Activated CD8-positive, alpha-beta T cell treated with anti-CD3 and anti-CD28 coated beads, Interleukin-2, amount 10 ng/mL, durations not matched to agents 7 days and 5 days (primary cell): ENCODE measurements at regions of chr5 and their contacts with region 1.

Region 1: GRCh38 chr5:82225525-82226172 is 52.5 kb downstream of the RPS23 start:
- DNase-seq: peak; percentile 72
- ATAC-seq: peak; percentile 90
- H3K4me3 Mint-ChIP-seq: no peak overlapping the region
- H3K27ac Mint-ChIP-seq: no peak overlapping the region
- H3K4me1 Mint-ChIP-seq: peaks cover 2% of the 10 kb centered on the region
- H3K27me3 Mint-ChIP-seq: no peaks in the 10 kb centered on the region

Region 2: DNA sequence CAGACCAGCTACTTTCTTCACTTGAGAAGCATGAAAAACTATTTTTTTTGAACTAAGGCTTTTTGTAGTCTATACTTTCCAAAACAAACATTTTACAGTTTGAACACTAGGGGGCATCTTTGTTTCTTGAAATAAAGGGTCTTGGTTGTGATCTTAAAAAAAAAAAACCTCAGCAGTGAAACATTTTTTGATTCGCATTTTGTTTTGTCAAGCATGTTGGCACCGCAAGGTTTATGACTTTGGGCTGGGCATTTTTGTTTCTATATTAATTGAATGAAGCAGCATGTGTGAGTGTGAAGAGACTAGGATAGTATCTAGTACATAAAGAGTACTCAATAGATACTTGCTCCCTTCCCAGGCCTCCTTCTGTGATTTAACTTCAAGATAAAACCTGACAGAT is 800.1 kb before region 1 on chr5:
- CTCF ChIA-PET with region 1: interaction called, 19 read pairs
- POLR2A ChIA-PET with region 1: no interaction called
- DNase-seq: no peak
- ATAC-seq: peak; percentile 47
- H3K4me3 Mint-ChIP-seq: no peak overlapping the region
- H3K27ac Mint-ChIP-seq: no peak overlapping the region
- H3K4me1 Mint-ChIP-seq: peaks cover 15% of the 10 kb centered on the region
- H3K27me3 Mint-ChIP-seq: no peaks in the 10 kb centered on the region

Region 3: GRCh38 chr5:82656341-82656761 is 430.7 kb after region 1 on chr5:
- CTCF ChIA-PET with region 1: no interaction called
- POLR2A ChIA-PET with region 1: no interaction called
- DNase-seq: no peak
- ATAC-seq: no peak
- H3K4me3 Mint-ChIP-seq: no peak overlapping the region
- H3K27ac Mint-ChIP-seq: no peak overlapping the region
- H3K4me1 Mint-ChIP-seq: peaks cover 19% of the 10 kb centered on the region
- H3K27me3 Mint-ChIP-seq: peaks cover 10% of the 10 kb centered on the region